ENCODE measurements at regions of chr21 and their contacts with region 1.

Region 1: GRCh38 chr21:34100790-34101189 is 27.4 kb downstream of the MRPS6 start:
- DNase-seq: peak; percentile 41
- ATAC-seq: no peak; the same call in 1 of the 2 replicates
- H3K4me3 ChIP-seq: no peak overlapping the region
- H3K27ac ChIP-seq: no peak overlapping the region
- H3K4me1 ChIP-seq: peaks cover 15% of the 10 kb centered on the region
- H3K27me3 ChIP-seq: no peaks in the 10 kb centered on the region
- CTCF ChIP-seq: no peak
- POLR2A ChIP-seq: no peak
- RAD21 ChIP-seq: no peak

Region 2: DNA sequence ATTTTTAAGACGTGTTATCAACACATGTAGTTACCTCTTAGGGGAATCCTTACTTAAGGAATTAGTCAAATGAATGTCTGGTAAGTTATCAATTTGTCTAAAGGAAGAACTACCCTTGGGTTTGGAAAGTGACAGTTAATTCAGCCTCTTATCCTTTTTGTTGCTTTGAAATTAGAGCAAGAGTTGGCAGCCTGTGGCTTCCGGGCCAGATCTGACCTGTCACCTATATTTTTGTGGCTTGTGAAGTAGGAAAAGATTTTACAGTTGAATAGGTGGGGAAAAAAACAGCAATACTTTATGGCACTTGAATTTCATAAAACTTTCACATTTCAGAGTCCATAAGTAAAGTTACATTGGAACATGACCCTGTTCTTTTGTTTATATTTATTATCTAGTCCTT is 21.9 kb before region 1 on chr21:
- CTCF ChIA-PET with region 1: no interaction called
- POLR2A ChIA-PET with region 1: no interaction called
- dilution Hi-C with region 1: no loop called
- in situ Hi-C with region 1: no loop called
- intact Hi-C with region 1: loop called (anchors 2 kb)
- DNase-seq: no peak
- ATAC-seq: no peak
- H3K4me3 ChIP-seq: no peak overlapping the region
- H3K27ac ChIP-seq: no peak overlapping the region
- H3K4me1 ChIP-seq: peaks cover 7% of the 10 kb centered on the region
- H3K27me3 ChIP-seq: no peaks in the 10 kb centered on the region
- CTCF ChIP-seq: no peak
- POLR2A ChIP-seq: no peak
- RAD21 ChIP-seq: no peak